ENCODE measurements at regions of chr2 and their contacts with region 1.

Region 1: GRCh38 chr2:100992262-100992661 is 9.8 kb upstream of the RPL31 start:
- DNase-seq: no peak
- H3K4me3 ChIP-seq: no peak overlapping the region
- H3K27ac ChIP-seq: no peak overlapping the region
- H3K4me1 ChIP-seq: no peaks in the 10 kb centered on the region
- H3K27me3 ChIP-seq: no peaks in the 10 kb centered on the region

Region 2: DNA sequence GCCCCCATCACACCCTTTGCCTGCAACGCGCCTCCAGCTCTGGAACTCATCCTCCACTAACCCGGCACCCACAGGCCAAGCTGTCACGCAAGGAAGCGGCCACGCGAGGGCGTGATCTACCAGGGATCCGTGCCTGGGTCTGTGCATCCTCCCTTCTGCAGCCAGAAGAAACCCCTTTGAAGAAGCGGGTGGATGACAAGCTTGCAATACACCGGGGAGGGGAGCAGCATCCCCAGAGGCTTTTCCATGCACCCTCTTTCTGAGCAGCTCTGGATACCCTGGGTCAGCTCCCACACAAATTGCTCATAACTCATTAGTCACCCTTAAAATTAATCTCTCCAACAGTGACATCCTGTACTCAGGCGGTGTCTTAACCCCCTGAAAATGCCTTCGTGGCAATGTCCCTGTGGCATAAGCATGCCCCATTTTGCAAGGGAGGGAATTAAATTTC is 381.9 kb before region 1 on chr2:
- in situ Hi-C with region 1: loop called (anchors 10 kb)
- DNase-seq: peak; percentile 80
- H3K4me3 ChIP-seq: no peak overlapping the region
- H3K27ac ChIP-seq: no peak overlapping the region
- H3K4me1 ChIP-seq: peaks cover 7% of the 10 kb centered on the region; the same call in 1 of the 2 replicates
- H3K27me3 ChIP-seq: no peaks in the 10 kb centered on the region

Region 3: DNA sequence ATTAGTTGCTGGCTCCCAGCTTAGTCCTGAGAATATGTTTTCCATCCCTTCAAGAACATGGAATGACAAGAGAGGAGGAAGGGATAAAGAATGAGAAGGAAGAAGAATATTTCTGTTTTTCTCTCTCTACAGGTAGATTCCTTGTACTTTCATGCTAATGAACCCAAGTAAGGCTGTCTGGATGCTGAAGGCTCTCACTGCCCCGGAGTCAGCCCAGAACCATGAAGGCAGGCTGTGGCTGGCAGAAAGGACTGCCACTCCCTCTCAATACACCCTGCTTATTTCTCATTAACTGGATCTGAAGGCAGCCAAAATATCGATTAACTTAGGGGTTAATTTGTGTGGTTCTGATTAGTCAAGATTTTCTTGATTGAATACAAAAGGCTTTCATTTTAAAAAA is 265.4 kb before region 1 on chr2:
- in situ Hi-C with region 1: loop called (anchors 5 kb)
- DNase-seq: no peak
- H3K4me3 ChIP-seq: no peak overlapping the region
- H3K27ac ChIP-seq: no peak overlapping the region
- H3K4me1 ChIP-seq: peaks cover 10% of the 10 kb centered on the region
- H3K27me3 ChIP-seq: peaks cover 37% of the 10 kb centered on the region